Activated CD4-positive, alpha-beta memory T cell treated with anti-CD3 and anti-CD28 coated beads for 36 hours (primary cell): ENCODE measurements at regions of chr11 and their contacts with region 1.

Region 1: DNA sequence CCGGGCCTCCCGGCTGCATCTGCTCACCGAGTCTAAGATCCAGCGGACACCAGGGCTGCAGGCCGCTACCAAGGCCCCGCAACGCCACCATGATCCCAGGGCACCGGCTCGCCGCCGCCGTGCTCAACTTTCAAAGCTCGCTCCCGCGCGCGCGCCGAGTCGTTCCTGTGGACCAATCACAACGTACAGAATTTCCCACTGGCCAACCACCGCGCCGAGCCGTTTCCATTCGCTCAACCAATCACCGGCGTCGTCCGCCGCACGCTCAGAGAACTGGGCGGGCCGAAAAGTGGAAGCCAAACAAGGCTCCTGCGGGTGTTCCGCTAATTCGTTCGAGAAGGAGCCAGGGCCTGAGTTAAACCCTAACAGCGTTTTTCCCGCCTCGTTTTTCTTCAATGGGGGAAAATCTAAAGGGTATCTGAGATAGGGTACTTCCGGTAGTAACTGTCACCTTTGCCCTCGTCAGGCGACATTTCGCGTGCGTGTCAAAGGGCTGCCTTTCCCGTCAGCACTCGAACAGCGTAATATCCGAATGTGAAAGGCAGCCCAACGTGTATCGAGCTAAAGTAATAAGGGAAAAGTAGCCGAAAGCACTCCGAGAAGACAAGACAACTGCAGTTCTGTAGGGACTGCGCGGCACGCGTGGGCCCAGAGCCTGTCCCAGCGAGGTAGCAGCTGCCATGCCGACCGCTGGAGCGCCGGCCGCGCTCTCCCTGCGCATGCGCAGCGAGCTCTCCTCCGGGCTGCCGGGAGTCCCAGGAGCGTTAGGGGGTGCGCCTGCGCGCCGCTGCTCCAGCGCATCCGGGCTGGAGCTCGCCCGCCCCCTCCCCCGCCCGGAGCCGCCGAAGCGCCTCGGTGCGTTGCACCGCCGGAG is at the starts of genes NCAPD3 and VPS26B:
- DNase-seq: peak; percentile 98
- H3K4me3 Mint-ChIP-seq: peak within 1 kb of the TSS; percentile 98
- H3K27ac Mint-ChIP-seq: peak within 1 kb of the TSS; percentile 97
- H3K4me1 Mint-ChIP-seq: peaks cover 54% of the 10 kb centered on the region
- H3K27me3 Mint-ChIP-seq: no peaks in the 10 kb centered on the region
- total RNA-seq, gene NCAPD3: 94.6 to 101 TPM
- total RNA-seq, gene VPS26B: 36.2 to 38.8 TPM

Region 2: GRCh38 chr11:134033696-134034491 is 190.2 kb before region 1 on chr11:
- CTCF ChIA-PET with region 1: no interaction called
- POLR2A ChIA-PET with region 1: interaction called, 3 read pairs
- intact Hi-C with region 1: loop called (anchors 10 kb)
- DNase-seq: peak; percentile 77
- H3K4me3 Mint-ChIP-seq: peak overlapping the region; percentile 16
- H3K27ac Mint-ChIP-seq: no peak overlapping the region
- H3K4me1 Mint-ChIP-seq: peaks cover 46% of the 10 kb centered on the region
- H3K27me3 Mint-ChIP-seq: no peaks in the 10 kb centered on the region

Region 3: DNA sequence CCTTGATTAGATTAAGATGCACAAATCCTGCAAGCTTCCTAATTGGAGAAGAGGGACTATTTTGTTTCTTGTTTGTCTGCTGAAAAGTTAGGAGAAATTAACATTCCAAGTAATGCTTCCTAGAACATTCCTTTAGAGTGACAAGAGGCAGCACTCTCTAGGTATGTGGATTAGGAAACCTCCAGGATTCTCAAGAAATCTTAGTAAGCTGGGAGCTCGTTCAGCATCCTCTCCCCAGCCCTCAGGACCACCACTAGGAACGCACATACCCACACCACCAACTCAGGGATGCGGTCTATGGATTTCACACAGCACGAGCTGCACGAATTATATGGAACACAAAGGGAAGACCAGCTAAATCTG is 53.2 kb before region 1 on chr11:
- CTCF ChIA-PET with region 1: no interaction called
- POLR2A ChIA-PET with region 1: no interaction called
- intact Hi-C with region 1: no loop called
- DNase-seq: no peak
- H3K4me3 Mint-ChIP-seq: no peak overlapping the region
- H3K27ac Mint-ChIP-seq: no peak overlapping the region
- H3K4me1 Mint-ChIP-seq: no peaks in the 10 kb centered on the region
- H3K27me3 Mint-ChIP-seq: no peaks in the 10 kb centered on the region

Region 4: GRCh38 chr11:134244655-134245054 is 20.6 kb after region 1 on chr11:
- CTCF ChIA-PET with region 1: interaction called, 10 read pairs
- POLR2A ChIA-PET with region 1: interaction called, 67 read pairs
- intact Hi-C with region 1: loop called (anchors 1 kb)
- DNase-seq: no peak
- H3K4me3 Mint-ChIP-seq: no peak overlapping the region
- H3K27ac Mint-ChIP-seq: no peak overlapping the region
- H3K4me1 Mint-ChIP-seq: peaks cover 12% of the 10 kb centered on the region
- H3K27me3 Mint-ChIP-seq: no peaks in the 10 kb centered on the region

Region 5: GRCh38 chr11:134275534-134276395 is 51.7 kb after region 1 on chr11 and contains the start of gene GLB1L3:
- CTCF ChIA-PET with region 1: interaction called, 10 read pairs
- POLR2A ChIA-PET with region 1: interaction called, 45 read pairs
- intact Hi-C with region 1: loop called (anchors 1 kb)
- DNase-seq: peak; percentile 86
- H3K4me3 Mint-ChIP-seq: peak within 1 kb of the TSS; percentile 95
- H3K27ac Mint-ChIP-seq: peak within 1 kb of the TSS; percentile 99
- H3K4me1 Mint-ChIP-seq: peaks cover 33% of the 10 kb centered on the region
- H3K27me3 Mint-ChIP-seq: peaks cover 4% of the 10 kb centered on the region
- total RNA-seq, gene GLB1L3: 7.1 to 8.6 TPM

Region 6: DNA sequence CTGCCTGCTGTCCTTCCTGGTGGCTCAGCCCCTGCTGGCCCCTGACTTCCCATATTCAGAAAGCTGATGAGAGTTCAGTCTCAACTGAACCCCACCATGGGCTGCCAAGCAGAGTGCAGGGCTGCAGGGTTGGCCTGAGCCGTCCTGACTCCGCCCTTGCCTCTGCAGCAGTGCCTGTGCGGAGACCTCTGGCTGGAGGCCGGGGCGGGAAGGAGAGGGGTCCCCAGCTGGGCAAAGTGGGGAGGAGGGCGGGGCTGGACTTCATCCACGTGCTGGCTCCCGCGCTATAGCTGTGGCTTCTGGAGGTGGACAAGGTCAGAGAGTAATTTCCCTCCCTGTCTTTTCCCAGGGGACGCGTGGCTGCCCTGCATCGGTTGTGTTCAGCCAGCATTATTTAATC is 65.7 kb after region 1 on chr11:
- CTCF ChIA-PET with region 1: no interaction called
- POLR2A ChIA-PET with region 1: no interaction called
- intact Hi-C with region 1: no loop called
- DNase-seq: no peak
- H3K4me3 Mint-ChIP-seq: no peak overlapping the region
- H3K27ac Mint-ChIP-seq: no peak overlapping the region
- H3K4me1 Mint-ChIP-seq: no peaks in the 10 kb centered on the region
- H3K27me3 Mint-ChIP-seq: no peaks in the 10 kb centered on the region

Region 7: DNA sequence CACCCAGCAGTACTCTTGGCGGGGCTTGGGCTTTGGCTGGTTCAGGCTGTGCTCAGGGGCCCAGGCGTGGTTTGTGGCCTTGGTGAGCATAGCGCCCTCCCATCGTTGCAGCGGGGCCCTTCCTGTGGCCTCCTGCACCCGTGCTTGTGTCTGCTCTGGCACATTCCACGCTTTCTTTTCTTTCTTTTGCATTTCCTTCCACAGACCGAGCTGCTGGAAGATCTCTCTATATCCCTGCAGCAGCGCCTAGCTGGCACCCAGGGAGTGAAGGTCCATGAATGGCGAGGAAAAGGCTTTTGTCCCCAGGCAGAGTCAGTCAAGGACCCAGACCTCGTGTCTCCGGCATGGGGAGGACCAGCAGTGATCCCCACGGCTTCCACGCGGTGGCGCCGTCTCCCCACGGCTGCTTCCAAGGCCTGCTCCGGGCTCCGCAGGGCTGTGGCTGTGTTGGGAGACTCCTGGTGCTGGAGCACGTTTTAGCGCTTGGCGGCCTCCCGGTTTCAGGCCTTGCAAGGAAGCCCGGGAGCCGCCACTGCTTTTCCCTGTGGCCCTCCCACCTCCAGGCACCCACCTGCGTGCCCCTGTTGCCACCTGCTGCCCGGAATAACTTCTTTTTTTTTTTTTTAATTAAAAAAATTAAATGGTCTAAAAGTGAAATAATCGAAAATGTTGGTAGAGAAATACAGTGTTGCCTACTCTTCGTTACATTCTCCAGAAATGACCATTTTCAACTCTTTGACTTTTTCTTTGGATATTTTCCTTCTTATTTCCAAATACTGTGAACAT is 136.2 kb after region 1 on chr11:
- CTCF ChIA-PET with region 1: no interaction called
- POLR2A ChIA-PET with region 1: no interaction called
- intact Hi-C with region 1: no loop called
- DNase-seq: peak; percentile 86
- H3K4me3 Mint-ChIP-seq: no peak overlapping the region
- H3K27ac Mint-ChIP-seq: no peak overlapping the region
- H3K4me1 Mint-ChIP-seq: peaks cover 11% of the 10 kb centered on the region
- H3K27me3 Mint-ChIP-seq: peaks cover 1% of the 10 kb centered on the region